MCF 10A (cell line): ENCODE measurements at regions of chr1 and their contacts with region 1.

Region 1: DNA sequence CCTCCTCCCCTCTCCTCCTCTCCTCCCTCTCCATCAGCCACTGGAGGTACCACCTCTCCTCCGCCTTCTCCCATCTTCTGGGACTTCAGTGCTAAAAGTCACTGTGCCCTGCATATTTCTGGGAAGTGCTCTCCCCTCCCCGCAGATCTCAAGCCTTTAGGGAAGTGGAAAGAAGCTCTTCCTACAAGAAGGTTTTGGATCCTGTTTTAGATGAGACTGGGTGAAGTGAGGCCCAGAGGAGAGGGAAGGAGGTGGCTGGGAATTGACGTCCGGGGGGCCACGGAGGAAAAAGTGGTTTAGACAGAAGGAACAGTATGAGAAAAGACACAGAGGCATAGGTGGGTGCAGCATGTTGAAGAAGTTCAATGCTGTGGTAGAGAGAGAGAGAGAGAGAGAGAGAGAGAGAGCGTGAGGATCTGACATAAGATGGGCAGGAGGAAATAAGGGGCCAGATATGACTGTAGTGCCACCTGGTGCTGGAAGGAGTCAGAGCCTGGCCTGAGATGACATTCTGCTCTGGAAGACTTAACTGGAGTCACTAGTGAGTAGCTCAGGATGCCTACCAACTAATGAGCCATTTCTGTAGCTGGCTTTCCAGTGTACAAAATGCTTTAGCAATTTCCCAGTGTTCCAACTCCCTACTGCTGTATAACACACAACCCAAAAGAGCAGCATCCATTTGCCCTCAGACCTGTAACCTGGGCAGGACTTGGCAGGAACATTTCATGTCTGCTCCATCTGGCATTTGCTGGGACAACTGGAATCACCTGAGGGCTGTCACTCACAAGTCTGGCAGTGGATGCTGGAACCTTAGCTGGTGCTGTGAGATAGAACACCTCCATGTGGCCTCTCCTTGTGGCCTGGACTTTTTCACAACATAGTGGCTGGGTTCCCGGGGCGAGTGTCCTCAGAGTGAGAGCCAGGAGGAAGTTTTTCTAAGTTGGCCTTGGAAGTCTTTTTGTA is 16.6 kb upstream of the ZSCAN20 start:
- DNase-seq: peak; percentile 86
- H3K4me3 Mint-ChIP-seq: no peak overlapping the region
- H3K27ac Mint-ChIP-seq: no peak overlapping the region
- H3K4me1 Mint-ChIP-seq: peaks cover 34% of the 10 kb centered on the region
- H3K27me3 Mint-ChIP-seq: no peaks in the 10 kb centered on the region
- CTCF ChIP-seq: peak; percentile 64

Region 2: GRCh38 chr1:33094971-33095604 is 360.7 kb before region 1 on chr1:
- CTCF ChIA-PET with region 1: interaction called, 5 read pairs
- POLR2A ChIA-PET with region 1: no interaction called
- intact Hi-C with region 1: loop called (anchors 5 kb)
- DNase-seq: peak; percentile 70
- H3K4me3 Mint-ChIP-seq: no peak overlapping the region
- H3K27ac Mint-ChIP-seq: no peak overlapping the region
- H3K4me1 Mint-ChIP-seq: peaks cover 18% of the 10 kb centered on the region
- H3K27me3 Mint-ChIP-seq: no peaks in the 10 kb centered on the region
- CTCF ChIP-seq: peak; percentile 91

Region 3: GRCh38 chr1:33219881-33220661 is 235.7 kb before region 1 on chr1:
- CTCF ChIA-PET with region 1: no interaction called
- POLR2A ChIA-PET with region 1: interaction called, 3 read pairs
- intact Hi-C with region 1: loop called (anchors 1 kb)
- DNase-seq: peak; percentile 84
- H3K4me3 Mint-ChIP-seq: no peak overlapping the region
- H3K27ac Mint-ChIP-seq: peak overlapping the region; percentile 95
- H3K4me1 Mint-ChIP-seq: peaks cover 40% of the 10 kb centered on the region
- H3K27me3 Mint-ChIP-seq: no peaks in the 10 kb centered on the region
- CTCF ChIP-seq: no peak

Region 4: DNA sequence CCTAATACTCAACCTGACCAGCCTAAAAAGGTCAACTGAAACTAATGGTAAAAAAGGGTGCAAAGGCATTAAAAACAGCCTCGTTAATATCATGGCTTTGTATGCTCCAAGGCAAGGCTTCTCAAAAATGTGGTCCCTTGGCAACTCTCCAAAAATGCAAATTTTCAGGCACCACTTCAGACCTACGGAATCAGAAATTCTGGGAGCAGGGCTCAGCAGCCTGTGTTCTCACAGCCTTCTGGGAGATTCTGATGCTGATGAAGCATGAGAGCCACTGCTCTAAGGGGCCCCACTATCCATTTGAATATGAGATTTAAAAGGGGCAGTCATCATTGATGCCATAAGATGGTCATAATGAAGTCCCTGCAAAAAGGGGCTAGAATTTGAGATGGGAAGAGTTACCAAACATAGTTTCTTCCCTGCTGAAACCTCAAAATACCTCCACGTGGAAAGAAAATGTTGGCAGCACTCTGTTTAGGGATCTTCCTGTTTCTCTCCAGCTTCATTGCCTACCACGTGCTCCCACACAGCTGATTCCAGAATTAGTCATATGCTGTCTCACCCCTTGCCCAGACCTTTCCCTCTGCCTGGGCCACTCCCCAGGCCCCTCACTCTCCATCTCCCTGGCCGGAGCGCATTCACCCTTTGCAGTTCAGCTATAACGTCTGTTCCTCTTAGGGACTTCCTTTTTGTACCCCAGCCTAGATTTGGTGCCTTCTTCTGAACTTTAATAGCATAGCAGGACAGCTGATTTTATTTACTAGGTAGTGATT is 71.6 kb before region 1 on chr1:
- CTCF ChIA-PET with region 1: interaction called, 3 read pairs
- POLR2A ChIA-PET with region 1: no interaction called
- intact Hi-C with region 1: loop called (anchors 5 kb)
- DNase-seq: peak; percentile 57
- H3K4me3 Mint-ChIP-seq: no peak overlapping the region
- H3K27ac Mint-ChIP-seq: peak overlapping the region; percentile 61
- H3K4me1 Mint-ChIP-seq: peaks cover 42% of the 10 kb centered on the region
- H3K27me3 Mint-ChIP-seq: no peaks in the 10 kb centered on the region
- CTCF ChIP-seq: no peak

Region 5: GRCh38 chr1:33443080-33443704 is 12.6 kb before region 1 on chr1:
- CTCF ChIA-PET with region 1: interaction called, 11 read pairs
- POLR2A ChIA-PET with region 1: interaction called, 6 read pairs
- intact Hi-C with region 1: no loop called
- DNase-seq: peak; percentile 51
- H3K4me3 Mint-ChIP-seq: no peak overlapping the region
- H3K27ac Mint-ChIP-seq: no peak overlapping the region
- H3K4me1 Mint-ChIP-seq: peaks cover 13% of the 10 kb centered on the region
- H3K27me3 Mint-ChIP-seq: no peaks in the 10 kb centered on the region
- CTCF ChIP-seq: no peak

Region 6: DNA sequence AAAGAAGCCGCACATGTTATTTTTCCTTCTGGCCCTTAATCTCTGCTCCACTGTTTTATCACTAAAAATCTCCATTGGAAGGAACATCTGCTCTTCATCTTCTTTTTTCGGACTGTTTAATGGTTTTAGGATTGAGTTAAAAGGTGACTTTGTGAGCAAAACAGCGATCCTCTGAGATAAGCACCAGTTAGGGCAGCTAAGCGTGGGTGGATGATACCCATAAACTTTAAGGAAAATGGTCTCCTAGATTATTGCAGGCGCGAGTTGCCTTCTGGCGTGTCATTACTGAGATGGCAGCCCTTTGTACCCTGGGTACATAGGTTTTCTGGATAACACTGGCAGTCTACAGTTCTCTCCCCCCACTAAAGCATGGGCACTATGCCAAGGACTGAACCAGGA is 364.1 kb after region 1 on chr1:
- CTCF ChIA-PET with region 1: no interaction called
- POLR2A ChIA-PET with region 1: no interaction called
- intact Hi-C with region 1: no loop called
- DNase-seq: no peak
- H3K4me3 Mint-ChIP-seq: no peak overlapping the region
- H3K27ac Mint-ChIP-seq: no peak overlapping the region
- H3K4me1 Mint-ChIP-seq: no peaks in the 10 kb centered on the region
- H3K27me3 Mint-ChIP-seq: no peaks in the 10 kb centered on the region
- CTCF ChIP-seq: no peak